Psoas muscle (tissue), 8 donors: ENCODE measurements at regions of chr2 and their contacts with region 1.

Region 1: GRCh38 chr2:52520644-52521043 is 1247.0 kb upstream of the CHAC2 start:
- DNase-seq: no peak
- ATAC-seq: no peak
- H3K4me3 ChIP-seq: no peak overlapping the region
- H3K27ac ChIP-seq: no peak overlapping the region
- H3K4me1 ChIP-seq: no peaks in the 10 kb centered on the region
- H3K27me3 ChIP-seq: no peaks in the 10 kb centered on the region
- CTCF ChIP-seq: no peak

Region 2: DNA sequence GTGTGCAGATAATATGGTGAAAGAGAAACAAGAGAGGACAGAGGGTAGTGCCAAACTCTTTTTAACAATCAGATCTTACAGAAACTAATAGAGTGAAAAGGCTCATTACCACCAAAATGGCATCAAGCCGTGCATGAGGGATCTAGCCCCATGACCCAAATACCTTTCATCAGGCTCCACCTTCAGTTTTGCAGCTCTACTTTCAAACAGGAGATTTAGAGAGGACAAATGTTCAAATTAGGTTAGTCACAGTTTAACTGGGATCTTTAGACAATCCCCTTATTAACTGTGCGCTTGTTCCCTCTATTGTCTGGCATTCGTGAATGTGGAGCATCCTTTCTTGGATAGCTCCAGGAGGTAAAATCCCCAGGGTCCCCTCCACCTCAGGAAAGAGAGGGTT is 37.6 kb after region 1 on chr2:
- intact Hi-C with region 1: loop called in 1 of 2 experiments (anchors 2 kb)
- DNase-seq: no peak
- ATAC-seq: no peak
- H3K4me3 ChIP-seq: no peak overlapping the region
- H3K27ac ChIP-seq: no peak overlapping the region
- H3K4me1 ChIP-seq: no peaks in the 10 kb centered on the region
- H3K27me3 ChIP-seq: no peaks in the 10 kb centered on the region
- CTCF ChIP-seq: no peak